Pancreas (tissue), 10 donors: ENCODE measurements at regions of chr11 and their contacts with region 1.

Region 1: GRCh38 chr11:27296497-27296896 is 66.5 kb downstream of the CCDC34 start:
- DNase-seq: no peak
- ATAC-seq: peak; percentile 76 to 94 (median 91)
- H3K4me3 ChIP-seq: no peak overlapping the region
- H3K27ac ChIP-seq: no peak overlapping the region
- H3K4me1 ChIP-seq: peaks cover 0 to 10% (median 7%) of the 10 kb centered on the region in 3 donors
- H3K27me3 ChIP-seq: no peaks in the 10 kb centered on the region
- CTCF ChIP-seq: peak; percentile 24 to 62 (median 40)

Region 2: DNA sequence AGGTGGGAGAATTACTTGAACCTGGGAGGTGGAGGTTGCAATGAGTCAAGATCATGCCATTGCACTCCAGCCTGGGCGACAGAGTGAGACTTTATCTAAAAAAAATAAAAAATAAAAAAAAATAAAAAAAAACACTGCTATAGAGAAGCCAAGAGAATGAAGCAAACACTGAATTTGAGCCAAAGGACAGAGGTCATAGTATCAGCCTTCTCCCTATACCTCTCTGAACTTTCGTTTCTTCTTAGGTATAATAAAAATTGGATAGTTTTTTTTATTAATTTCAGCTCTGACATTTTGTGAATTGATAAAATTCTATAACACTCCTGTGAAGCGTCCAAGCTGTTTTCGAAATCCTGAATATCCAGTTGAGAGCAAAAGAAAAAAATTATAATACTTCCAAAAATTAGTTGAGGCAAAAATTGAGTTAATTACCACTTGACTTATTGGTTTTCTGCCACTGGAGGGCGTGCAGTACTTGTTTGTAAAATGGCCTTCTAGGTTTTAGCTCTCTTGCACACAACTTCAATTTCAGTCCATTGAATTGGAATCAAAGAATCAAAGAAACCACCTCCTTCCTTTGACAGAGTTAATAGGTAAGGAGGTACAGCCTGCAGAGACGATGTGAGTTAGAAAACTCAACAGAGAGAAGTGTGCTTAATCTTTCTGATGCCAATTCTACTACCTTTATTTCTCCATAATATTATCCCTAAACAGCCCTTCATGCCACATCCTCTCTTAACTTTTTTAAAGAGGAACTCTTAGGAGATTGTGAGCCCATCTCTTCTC is 112.6 kb before region 1 on chr11:
- intact Hi-C with region 1: loop called in 1 of 3 experiments (anchors 10 kb)
- DNase-seq: peak in 4 of 6 donors; percentile 36 to 65 (median 40)
- ATAC-seq: peak; percentile 71 to 82 (median 76)
- H3K4me3 ChIP-seq: no peak overlapping the region
- H3K27ac ChIP-seq: no peak overlapping the region
- H3K4me1 ChIP-seq: peaks cover 11 to 20% (median 15%) of the 10 kb centered on the region in 3 donors
- H3K27me3 ChIP-seq: no peaks in the 10 kb centered on the region
- CTCF ChIP-seq: peak; percentile 37 to 58 (median 46)

Region 3: DNA sequence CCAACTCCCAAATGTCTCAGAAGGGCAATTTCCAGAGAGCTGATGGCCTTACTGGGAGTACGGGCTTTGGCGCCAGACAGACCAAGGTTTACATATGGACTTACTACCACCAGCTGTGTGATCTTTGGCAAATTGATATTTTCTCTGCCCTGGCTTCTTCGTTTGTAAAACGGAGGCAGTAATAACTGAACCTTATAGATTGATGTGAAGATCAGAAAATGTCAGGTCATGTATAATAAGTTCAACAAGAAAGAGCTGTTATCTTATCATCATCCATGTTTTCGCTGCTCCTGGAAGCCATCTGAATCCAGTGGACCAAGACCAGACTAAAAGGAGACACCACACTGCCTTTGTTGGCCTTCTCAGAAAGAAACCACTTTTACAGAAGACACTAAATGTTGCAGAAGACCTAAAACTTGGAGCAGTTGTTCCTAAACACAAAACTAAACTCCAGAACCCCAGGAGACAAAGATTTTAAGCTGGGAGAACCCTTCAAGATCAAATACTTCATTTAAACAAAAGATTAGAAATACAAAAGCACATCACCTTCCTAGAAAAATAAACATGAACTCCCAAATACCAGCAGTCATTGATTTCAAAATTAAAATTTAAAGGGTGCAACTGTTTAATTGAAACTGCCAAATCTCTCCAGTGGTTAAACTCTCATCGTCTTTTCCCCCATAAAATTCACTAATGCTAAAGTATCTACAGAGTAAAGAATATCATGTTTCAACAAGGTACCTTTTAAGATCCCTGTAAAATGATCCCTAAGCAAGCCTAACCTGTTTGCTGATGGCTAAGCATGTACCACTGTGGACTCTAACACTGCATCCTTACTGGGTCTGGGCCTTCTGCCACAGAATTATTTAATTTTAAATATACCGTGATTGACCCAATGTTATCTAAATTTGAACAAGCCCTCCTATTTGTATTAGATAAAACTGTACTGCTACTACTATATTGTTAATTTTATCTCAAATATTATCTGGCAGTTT is 120.0 kb after region 1 on chr11:
- intact Hi-C with region 1: no loop called
- DNase-seq: no peak
- ATAC-seq: peak in 3 of 4 donors; percentile 48 to 73 (median 69)
- H3K4me3 ChIP-seq: no peak overlapping the region
- H3K27ac ChIP-seq: no peak overlapping the region
- H3K4me1 ChIP-seq: peaks cover 5 to 60% (median 25%) of the 10 kb centered on the region in 3 donors
- H3K27me3 ChIP-seq: no peaks in the 10 kb centered on the region
- CTCF ChIP-seq: no peak

Region 4: DNA sequence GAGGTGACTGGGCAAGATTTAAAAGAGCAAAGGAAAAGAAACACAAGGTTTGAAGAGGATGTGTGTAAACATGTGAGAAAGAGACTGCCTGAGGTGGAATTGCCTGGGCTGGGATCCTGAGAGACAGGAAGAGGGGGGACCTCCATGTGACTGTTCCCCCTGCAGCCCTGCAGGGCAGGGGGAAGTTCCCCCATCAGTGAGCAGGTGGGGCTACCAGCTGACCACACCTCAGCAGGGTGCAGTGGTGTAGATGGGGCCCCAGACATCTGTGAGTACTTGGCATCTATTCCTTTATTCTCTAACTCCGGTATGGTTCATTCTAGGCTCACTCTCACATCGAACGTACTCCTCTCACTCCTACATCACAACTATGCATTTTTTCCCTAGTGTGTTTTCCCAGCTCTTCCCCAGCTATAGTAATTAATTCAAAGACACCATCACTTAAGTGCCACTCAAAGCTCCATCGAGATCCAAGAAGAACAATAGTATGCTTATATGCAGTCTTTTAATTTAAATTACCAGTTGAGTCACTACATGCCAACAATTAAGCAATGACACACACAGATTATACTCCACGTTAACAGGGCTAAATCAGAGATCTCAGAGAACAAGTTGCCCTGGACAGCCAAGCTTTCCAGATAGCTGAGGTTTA is 133.4 kb after region 1 on chr11:
- intact Hi-C with region 1: no loop called
- DNase-seq: no peak
- ATAC-seq: peak in 1 of 4 donors; percentile 12
- H3K4me3 ChIP-seq: no peak overlapping the region
- H3K27ac ChIP-seq: peak overlapping the region in 2 of 4 donors; percentile 6 to 35
- H3K4me1 ChIP-seq: peaks cover 6 to 53% (median 36%) of the 10 kb centered on the region in 3 donors
- H3K27me3 ChIP-seq: no peaks in the 10 kb centered on the region
- CTCF ChIP-seq: no peak